ENCODE measurements at regions of chr12 and their contacts with region 1.

Region 1: DNA sequence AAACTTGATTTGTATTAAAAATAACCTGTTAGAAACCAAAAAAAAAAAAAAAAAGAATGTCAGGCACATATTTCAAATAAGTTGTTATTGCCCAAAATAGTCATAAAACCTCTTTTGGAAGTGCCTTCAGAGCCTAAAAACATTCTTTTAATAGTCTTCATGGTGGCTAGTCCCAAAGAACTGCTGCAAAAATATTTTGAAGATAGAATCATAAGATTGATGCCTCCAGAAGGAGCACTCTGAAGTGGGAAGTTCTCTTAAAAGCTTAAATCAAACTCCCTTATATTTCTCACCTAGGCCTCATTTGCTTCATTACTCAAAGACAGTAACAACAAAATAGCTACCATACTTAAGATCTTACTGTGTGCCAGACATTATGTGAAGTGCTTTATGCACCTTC is 27.2 kb upstream of the NT5DC3 start:
- DNase-seq: no peak
- H3K4me3 Mint-ChIP-seq: no peak overlapping the region
- H3K27ac Mint-ChIP-seq: no peak overlapping the region
- H3K4me1 Mint-ChIP-seq: no peaks in the 10 kb centered on the region
- H3K27me3 Mint-ChIP-seq: no peaks in the 10 kb centered on the region
- CTCF ChIP-seq: no peak

Region 2: GRCh38 chr12:103571286-103571685 is 296.9 kb before region 1 on chr12:
- CTCF ChIA-PET with region 1: interaction called, 3 read pairs
- intact Hi-C with region 1: loop called (anchors 2 kb)
- DNase-seq: peak; percentile 56
- H3K4me3 Mint-ChIP-seq: peak overlapping the region; percentile 51
- H3K27ac Mint-ChIP-seq: no peak overlapping the region
- H3K4me1 Mint-ChIP-seq: peaks cover 8% of the 10 kb centered on the region
- H3K27me3 Mint-ChIP-seq: peaks cover 37% of the 10 kb centered on the region
- CTCF ChIP-seq: no peak

Region 3: DNA sequence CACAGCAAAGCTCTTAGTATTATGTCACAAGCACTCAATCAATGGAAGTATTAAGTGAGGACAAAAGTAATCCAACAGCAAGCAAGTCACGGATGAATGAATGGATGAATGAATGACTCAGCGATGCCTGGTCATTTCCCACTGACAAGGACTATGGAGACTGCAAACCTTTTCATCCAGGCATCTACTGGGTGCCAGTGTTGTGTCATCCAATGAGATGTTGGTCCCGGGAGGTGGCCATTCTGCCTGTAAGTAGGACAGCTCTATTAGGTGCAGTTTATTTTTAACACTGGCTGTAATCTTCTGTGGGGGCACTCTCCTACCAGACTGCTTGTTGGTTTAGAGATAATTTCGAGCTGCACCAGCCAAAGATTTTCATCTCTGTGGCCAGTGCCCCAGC is 241.7 kb before region 1 on chr12:
- CTCF ChIA-PET with region 1: interaction called, 4 read pairs
- intact Hi-C with region 1: loop called (anchors 1 kb)
- DNase-seq: peak; percentile 59
- H3K4me3 Mint-ChIP-seq: no peak overlapping the region
- H3K27ac Mint-ChIP-seq: no peak overlapping the region
- H3K4me1 Mint-ChIP-seq: no peaks in the 10 kb centered on the region
- H3K27me3 Mint-ChIP-seq: no peaks in the 10 kb centered on the region
- CTCF ChIP-seq: no peak

Region 4: DNA sequence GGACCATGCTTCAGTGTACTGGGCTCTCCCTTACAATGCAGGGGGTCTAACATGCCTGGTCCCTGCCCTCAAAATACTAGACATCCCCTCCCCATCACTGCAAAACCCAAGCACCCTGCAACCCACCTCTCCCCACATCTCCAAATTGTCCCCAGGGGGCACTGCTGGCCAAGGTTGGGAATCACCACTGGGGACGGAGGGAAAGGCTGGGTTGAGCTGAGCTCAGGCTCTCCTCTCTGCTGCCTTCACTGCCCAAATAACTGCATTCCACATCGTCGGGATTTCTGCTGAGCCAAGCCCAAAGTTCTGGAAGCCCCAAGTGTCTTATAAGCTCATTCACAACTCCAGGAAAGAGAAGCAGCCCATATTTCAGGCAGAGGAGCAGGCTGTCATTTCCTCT is 96.7 kb before region 1 on chr12:
- CTCF ChIA-PET with region 1: interaction called, 21 read pairs
- intact Hi-C with region 1: loop called (anchors 1 kb)
- DNase-seq: peak; percentile 75
- H3K4me3 Mint-ChIP-seq: no peak overlapping the region
- H3K27ac Mint-ChIP-seq: peak overlapping the region; percentile 60
- H3K4me1 Mint-ChIP-seq: no peaks in the 10 kb centered on the region
- H3K27me3 Mint-ChIP-seq: no peaks in the 10 kb centered on the region
- CTCF ChIP-seq: peak; percentile 72

Region 5: GRCh38 chr12:103794309-103795213 is 73.7 kb before region 1 on chr12:
- CTCF ChIA-PET with region 1: no interaction called
- intact Hi-C with region 1: no loop called
- DNase-seq: no peak
- H3K4me3 Mint-ChIP-seq: no peak overlapping the region
- H3K27ac Mint-ChIP-seq: no peak overlapping the region
- H3K4me1 Mint-ChIP-seq: peaks cover 21% of the 10 kb centered on the region
- H3K27me3 Mint-ChIP-seq: no peaks in the 10 kb centered on the region
- CTCF ChIP-seq: no peak